ENCODE measurements at regions of chr7 and their contacts with region 1.

Region 1: DNA sequence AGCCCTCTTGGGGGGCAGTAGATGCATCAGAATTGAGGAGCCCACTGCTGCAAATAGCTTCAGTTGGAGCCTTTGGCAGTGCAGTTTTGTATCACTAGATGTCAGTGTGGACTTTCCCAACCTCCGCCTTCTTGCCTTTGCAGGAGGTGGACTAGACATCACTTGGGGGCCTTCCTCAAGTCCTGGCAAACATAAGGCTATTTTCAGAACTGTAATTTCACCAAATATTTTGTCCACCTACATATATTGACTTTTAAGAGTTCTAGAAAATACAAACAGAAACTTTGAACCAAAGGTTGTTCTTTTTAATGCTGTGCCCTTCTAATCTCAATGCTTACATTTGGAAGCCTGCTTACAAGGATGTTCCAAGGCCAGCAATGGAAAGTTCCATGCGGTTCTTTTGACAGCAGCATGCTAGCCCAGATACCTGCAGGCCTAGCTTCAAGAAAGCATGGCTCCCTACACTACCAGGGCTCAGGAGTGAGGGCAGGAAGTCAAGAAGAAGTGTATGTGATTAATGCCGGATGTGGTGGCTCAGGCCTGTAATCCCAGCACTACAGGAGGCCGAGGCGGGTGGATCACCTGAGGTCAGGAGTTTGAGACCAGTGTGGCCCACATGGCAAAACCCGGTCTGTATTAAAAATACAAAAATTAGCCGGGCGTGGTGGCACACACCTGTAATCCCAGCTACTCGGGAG is 8.0 kb upstream of the ZNRF2 start:
- DNase-seq: peak; percentile 28
- H3K4me3 Mint-ChIP-seq: no peak overlapping the region
- H3K27ac Mint-ChIP-seq: no peak overlapping the region
- H3K4me1 Mint-ChIP-seq: peaks cover 8% of the 10 kb centered on the region
- H3K27me3 Mint-ChIP-seq: peaks cover 4% of the 10 kb centered on the region

Region 2: DNA sequence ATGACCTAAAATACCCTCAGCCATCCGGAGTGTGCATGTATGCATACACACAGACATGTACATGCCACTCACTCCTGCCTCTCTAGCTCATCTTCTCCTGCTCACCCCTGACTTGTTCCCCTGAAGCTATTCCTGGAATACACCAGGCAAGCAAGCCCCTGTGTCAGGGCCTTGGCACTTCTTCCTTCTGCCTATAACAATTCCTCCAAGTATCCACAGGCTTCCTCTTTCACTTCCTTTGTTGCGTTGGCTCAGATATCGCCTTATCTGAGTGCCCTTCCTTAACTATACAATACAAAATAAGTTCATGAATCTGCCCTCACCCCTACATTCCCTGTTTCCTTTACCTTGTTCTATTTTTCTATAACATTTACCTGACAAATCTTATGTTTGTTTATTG is 113.4 kb after region 1 on chr7:
- intact Hi-C with region 1: no loop called
- DNase-seq: no peak
- H3K4me3 Mint-ChIP-seq: no peak overlapping the region
- H3K27ac Mint-ChIP-seq: no peak overlapping the region
- H3K4me1 Mint-ChIP-seq: no peaks in the 10 kb centered on the region
- H3K27me3 Mint-ChIP-seq: peaks cover 3% of the 10 kb centered on the region

Region 3: DNA sequence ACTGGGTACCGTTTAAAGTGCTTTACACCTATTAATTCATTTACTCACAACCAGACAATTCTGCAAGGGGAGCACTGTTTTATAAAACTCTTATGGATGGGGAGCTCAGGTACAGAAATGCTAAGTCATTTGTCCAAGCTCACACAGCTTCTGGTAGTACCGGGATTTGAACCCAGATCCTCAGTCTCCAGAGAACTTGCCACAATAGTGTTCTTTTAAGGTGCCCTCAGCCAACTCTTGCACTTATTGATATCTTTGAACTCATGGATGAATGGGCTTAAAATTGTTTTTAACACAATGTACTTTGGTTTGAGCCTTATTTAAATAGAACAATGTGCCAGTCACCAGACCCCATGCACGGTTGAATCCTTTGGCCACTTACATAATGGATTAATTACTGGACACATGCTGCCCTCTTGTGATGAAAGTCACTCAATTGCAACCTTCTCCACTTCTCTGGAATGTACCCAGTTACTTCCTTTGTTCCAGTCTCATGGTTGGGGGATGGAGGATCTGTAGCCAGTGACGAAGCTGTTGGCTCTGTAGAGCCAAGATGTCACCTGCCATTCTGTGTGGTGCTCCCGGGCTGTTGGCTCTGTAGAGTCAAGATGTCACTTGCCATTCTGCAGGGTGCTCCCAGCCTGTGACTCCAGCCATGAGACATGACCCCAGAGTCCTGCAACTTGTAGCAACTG is 136.6 kb after region 1 on chr7:
- intact Hi-C with region 1: loop called (anchors 1 kb)
- DNase-seq: no peak
- H3K4me3 Mint-ChIP-seq: no peak overlapping the region
- H3K27ac Mint-ChIP-seq: no peak overlapping the region
- H3K4me1 Mint-ChIP-seq: no peaks in the 10 kb centered on the region
- H3K27me3 Mint-ChIP-seq: no peaks in the 10 kb centered on the region

Region 4: GRCh38 chr7:30445770-30446169 is 169.4 kb after region 1 on chr7:
- intact Hi-C with region 1: loop called (anchors 5 kb)
- DNase-seq: peak; percentile 68
- H3K4me3 Mint-ChIP-seq: no peak overlapping the region
- H3K27ac Mint-ChIP-seq: peak overlapping the region; percentile 33
- H3K4me1 Mint-ChIP-seq: peaks cover 7% of the 10 kb centered on the region
- H3K27me3 Mint-ChIP-seq: no peaks in the 10 kb centered on the region

Region 5: GRCh38 chr7:30478349-30479201 is 202.2 kb after region 1 on chr7 and contains the start of gene NOD1:
- intact Hi-C with region 1: loop called (anchors 2 kb)
- DNase-seq: peak; percentile 71
- H3K4me3 Mint-ChIP-seq: peak within 1 kb of the TSS; percentile 90
- H3K27ac Mint-ChIP-seq: peak within 1 kb of the TSS; percentile 91
- H3K4me1 Mint-ChIP-seq: peaks cover 61% of the 10 kb centered on the region
- H3K27me3 Mint-ChIP-seq: no peaks in the 10 kb centered on the region
- total RNA-seq, gene NOD1: 9.1 and 13.1 TPM in 2 replicates

Region 6: GRCh38 chr7:30564243-30564892 is 288.0 kb after region 1 on chr7:
- intact Hi-C with region 1: loop called (anchors 1 kb)
- DNase-seq: peak; percentile 65
- H3K4me3 Mint-ChIP-seq: no peak overlapping the region
- H3K27ac Mint-ChIP-seq: peak overlapping the region; percentile 13
- H3K4me1 Mint-ChIP-seq: no peaks in the 10 kb centered on the region
- H3K27me3 Mint-ChIP-seq: no peaks in the 10 kb centered on the region

Measured in activated T-helper 1 cell treated with anti-CD3 and anti-CD28 coated beads, Interleukin-12 subunit alpha, Interleukin-12 subunit beta, Interleukin-2, Interleukin-4 antibody, amounts not matched to agents 30 ng/mL and 10 ng/mL and 1 ng/mL, durations not matched to agents 14 hours and 24 hours and 36 hours (primary cell).